ENCODE measurements at regions of chr19 and their contacts with region 1.

Region 1: GRCh38 chr19:28633319-28634018 is 579.5 kb downstream of the UQCRFS1 start:
- DNase-seq: peak; percentile 54
- H3K4me3 Mint-ChIP-seq: no peak overlapping the region
- H3K27ac Mint-ChIP-seq: no peak overlapping the region
- H3K4me1 Mint-ChIP-seq: no peaks in the 10 kb centered on the region
- H3K27me3 Mint-ChIP-seq: no peaks in the 10 kb centered on the region

Region 2: DNA sequence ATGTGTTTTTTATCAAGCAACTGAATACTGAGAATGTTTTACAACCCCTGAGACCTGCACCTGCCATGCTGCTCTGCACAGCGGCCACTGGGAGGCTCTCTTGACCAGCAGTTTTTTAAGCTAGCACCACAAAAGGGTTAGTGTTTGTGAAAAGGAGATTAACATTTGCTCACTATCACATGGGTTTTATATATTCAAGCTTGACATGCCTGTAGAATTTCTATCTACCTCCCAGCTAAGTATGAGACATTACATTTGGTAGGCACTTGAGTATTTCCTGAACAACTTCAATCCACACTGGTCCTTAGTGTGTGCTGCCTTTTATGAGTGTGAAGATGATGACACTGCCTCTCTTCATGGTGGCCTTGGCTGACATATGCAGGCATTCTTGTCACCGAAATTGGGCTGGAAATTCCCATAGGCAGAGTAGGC is 659.4 kb before region 1 on chr19:
- CTCF ChIA-PET with region 1: interaction called, 3 read pairs
- intact Hi-C with region 1: loop called (anchors 5 kb)
- DNase-seq: peak; percentile 23
- H3K4me3 Mint-ChIP-seq: no peak overlapping the region
- H3K27ac Mint-ChIP-seq: no peak overlapping the region
- H3K4me1 Mint-ChIP-seq: no peaks in the 10 kb centered on the region
- H3K27me3 Mint-ChIP-seq: no peaks in the 10 kb centered on the region

Region 3: GRCh38 chr19:28466107-28467045 is 167.1 kb before region 1 on chr19:
- CTCF ChIA-PET with region 1: interaction called, 8 read pairs
- intact Hi-C with region 1: loop called (anchors 1 kb)
- DNase-seq: peak; percentile 77
- H3K4me3 Mint-ChIP-seq: no peak overlapping the region
- H3K27ac Mint-ChIP-seq: no peak overlapping the region
- H3K4me1 Mint-ChIP-seq: peaks cover 14% of the 10 kb centered on the region
- H3K27me3 Mint-ChIP-seq: peaks cover 6% of the 10 kb centered on the region

Region 4: GRCh38 chr19:28569132-28570131 is 64.0 kb before region 1 on chr19:
- CTCF ChIA-PET with region 1: no interaction called
- intact Hi-C with region 1: no loop called
- DNase-seq: no peak
- H3K4me3 Mint-ChIP-seq: no peak overlapping the region
- H3K27ac Mint-ChIP-seq: no peak overlapping the region
- H3K4me1 Mint-ChIP-seq: no peaks in the 10 kb centered on the region
- H3K27me3 Mint-ChIP-seq: peaks cover 1% of the 10 kb centered on the region

Measured in activated naive CD4-positive, alpha-beta T cell treated with anti-CD3 and anti-CD28 coated beads for 36 hours (primary cell).